ENCODE measurements at regions of chr2 and their contacts with region 1.

Region 1: DNA sequence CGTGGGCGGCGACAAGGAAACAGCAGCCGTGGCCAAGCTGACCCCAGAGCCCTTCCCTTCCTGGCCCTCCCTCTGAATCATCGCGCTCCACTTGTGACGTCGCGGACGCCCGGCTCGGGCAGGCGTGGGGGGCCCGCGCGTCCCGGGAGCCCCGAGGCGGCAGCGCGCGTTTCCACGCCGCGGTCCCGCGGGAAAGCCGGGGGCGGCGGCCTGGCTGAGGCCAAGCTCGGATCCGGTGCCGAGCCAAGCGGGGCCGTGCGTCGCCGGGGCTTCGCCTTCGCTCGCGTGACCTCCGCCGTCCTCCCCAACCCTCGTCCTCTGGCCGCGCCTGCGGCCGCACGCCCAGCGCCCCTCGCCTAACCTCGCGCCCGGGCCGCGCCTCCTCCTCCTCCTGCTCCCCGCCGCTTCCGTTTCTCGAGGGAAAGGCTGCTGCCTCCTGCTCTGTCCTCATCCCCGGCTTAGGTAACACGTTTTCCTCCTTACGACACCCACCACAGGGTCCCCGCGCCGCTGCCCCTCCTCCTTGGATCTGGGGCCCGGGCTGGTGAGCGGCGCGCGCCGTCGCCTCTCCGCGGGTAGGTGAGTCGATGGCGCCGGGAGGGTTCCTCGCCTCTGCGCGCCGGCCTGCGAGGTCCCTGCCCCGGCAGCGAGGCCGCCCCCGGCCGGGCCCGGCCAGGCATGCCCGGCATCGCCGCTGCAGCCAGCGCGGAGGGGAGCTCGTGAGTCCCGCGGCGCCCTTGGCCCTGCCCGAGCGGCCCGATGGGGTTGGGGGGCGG is at the start of gene INPP1:
- DNase-seq: peak; percentile 57
- ATAC-seq: peak; percentile 63
- H3K4me3 ChIP-seq: peak within 1 kb of the TSS; percentile 49 to 79 (median 72)
- H3K4me3 Mint-ChIP-seq: peak within 1 kb of the TSS; percentile 90
- H3K27ac ChIP-seq: no peak within 1 kb of the TSS
- H3K27ac Mint-ChIP-seq: peak within 1 kb of the TSS; percentile 73
- H3K4me1 ChIP-seq: peaks cover 7 to 11% of the 10 kb centered on the region in 2 donors
- H3K4me1 Mint-ChIP-seq: peaks cover 13% of the 10 kb centered on the region
- H3K27me3 ChIP-seq: no peaks in the 10 kb centered on the region
- H3K27me3 Mint-ChIP-seq: no peaks in the 10 kb centered on the region
- CTCF ChIP-seq: no peak
- total RNA-seq, gene INPP1: 3.7 and 4.6 TPM in 2 replicates

Region 2: DNA sequence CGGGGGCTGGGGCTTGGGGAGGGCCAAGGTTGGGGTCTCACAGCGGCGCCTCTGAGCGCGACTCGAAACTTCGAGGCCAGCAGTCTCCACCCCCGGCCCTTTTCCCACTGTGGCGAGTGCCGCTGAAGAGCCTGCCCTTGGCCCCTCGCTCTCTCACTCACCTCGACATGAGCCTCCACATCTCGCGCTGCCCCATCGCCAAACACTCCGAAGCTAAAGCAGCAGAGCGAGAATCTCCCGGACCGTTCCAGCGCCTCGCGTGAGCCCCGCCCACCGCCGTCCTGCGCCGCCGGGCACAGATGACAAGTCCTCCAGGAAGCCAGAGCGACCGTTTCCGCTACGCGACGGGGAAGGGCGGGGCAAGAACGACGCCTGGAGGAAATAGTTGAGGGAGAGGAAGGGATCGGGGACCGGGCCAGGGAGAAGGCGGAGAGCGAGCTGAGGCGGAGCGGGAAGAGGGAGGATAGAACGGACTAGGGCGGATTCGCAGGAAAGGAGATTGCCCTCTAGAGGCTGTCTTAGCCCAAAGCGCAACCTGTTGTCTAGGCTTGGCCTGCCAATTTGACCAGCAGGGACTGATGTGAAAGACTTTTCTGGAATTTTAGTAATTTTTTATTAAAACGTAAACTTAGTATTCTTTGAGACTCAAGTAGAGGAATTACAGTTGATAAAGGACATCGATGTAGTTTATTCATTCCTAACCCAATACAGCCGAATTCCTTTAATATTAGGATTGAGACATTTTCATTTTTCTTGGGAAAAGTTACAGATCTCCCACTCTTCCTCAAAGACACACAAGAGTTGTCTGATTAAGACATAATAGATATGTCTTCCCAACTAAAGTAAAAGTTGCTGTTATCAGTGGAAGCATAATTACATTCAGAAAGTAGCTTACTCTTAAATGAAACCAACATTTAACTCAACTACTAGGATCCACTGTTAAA is 23.9 kb before region 1 on chr2 and contains the start of gene HIBCH:
- CTCF ChIA-PET with region 1: interaction called, 7 read pairs
- POLR2A ChIA-PET with region 1: no interaction called
- intact Hi-C with region 1: loop called (anchors 1 kb)
- DNase-seq: peak; percentile 85
- ATAC-seq: peak; percentile 94
- H3K4me3 ChIP-seq: peak within 1 kb of the TSS; percentile 73 to 87 (median 79)
- H3K4me3 Mint-ChIP-seq: peak within 1 kb of the TSS; percentile 95
- H3K27ac ChIP-seq: peak within 1 kb of the TSS; percentile 80 to 84
- H3K27ac Mint-ChIP-seq: peak within 1 kb of the TSS; percentile 95
- H3K4me1 ChIP-seq: peaks cover 20 to 26% of the 10 kb centered on the region in 2 donors
- H3K4me1 Mint-ChIP-seq: peaks cover 42% of the 10 kb centered on the region
- H3K27me3 ChIP-seq: no peaks in the 10 kb centered on the region
- H3K27me3 Mint-ChIP-seq: peaks cover 8% of the 10 kb centered on the region
- CTCF ChIP-seq: peak; percentile 77
- total RNA-seq, gene HIBCH: 30.2 and 36.9 TPM in 2 replicates

Region 3: GRCh38 chr2:190376591-190377245 is 33.0 kb after region 1 on chr2:
- CTCF ChIA-PET with region 1: interaction called, 3 read pairs
- POLR2A ChIA-PET with region 1: no interaction called
- intact Hi-C with region 1: loop called (anchors 2 kb)
- DNase-seq: no peak
- ATAC-seq: no peak
- H3K4me3 ChIP-seq: no peak overlapping the region
- H3K4me3 Mint-ChIP-seq: no peak overlapping the region
- H3K27ac ChIP-seq: no peak overlapping the region
- H3K27ac Mint-ChIP-seq: no peak overlapping the region
- H3K4me1 ChIP-seq: no peaks in the 10 kb centered on the region
- H3K4me1 Mint-ChIP-seq: peaks cover 2% of the 10 kb centered on the region
- H3K27me3 ChIP-seq: no peaks in the 10 kb centered on the region
- H3K27me3 Mint-ChIP-seq: no peaks in the 10 kb centered on the region
- CTCF ChIP-seq: no peak

Region 4: DNA sequence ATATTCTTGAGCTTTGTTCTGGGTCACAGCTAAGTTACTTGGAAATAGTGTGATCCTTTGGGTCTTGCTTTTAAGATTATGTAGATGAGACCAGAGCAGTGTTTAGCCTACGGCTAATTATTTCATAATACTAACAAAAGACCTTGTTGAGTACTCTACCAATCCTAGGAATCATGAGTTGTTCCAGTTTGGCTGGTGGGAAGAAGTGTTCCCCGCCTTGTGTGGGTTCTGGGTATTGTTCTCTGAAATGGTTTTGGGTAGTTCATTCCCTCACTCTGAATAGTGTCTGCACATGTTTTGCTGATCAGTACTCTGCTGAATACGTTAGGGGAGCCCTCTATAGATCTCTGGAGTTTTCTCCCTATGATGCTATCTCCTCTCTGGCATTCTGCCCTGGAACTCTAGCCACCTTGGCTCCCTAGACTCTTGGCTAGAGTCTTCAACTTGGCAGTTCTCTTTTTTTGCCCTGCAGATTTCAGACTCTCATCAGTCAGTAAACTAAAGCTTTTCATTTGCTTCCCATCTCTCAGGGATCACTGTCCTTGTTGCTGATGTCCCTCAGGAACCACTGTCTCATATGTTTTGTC is 142.4 kb after region 1 on chr2:
- CTCF ChIA-PET with region 1: no interaction called
- POLR2A ChIA-PET with region 1: no interaction called
- intact Hi-C with region 1: no loop called
- DNase-seq: no peak
- ATAC-seq: no peak
- H3K4me3 ChIP-seq: no peak overlapping the region
- H3K4me3 Mint-ChIP-seq: no peak overlapping the region
- H3K27ac ChIP-seq: no peak overlapping the region
- H3K27ac Mint-ChIP-seq: no peak overlapping the region
- H3K4me1 ChIP-seq: no peaks in the 10 kb centered on the region
- H3K4me1 Mint-ChIP-seq: no peaks in the 10 kb centered on the region
- H3K27me3 ChIP-seq: no peaks in the 10 kb centered on the region
- H3K27me3 Mint-ChIP-seq: no peaks in the 10 kb centered on the region
- CTCF ChIP-seq: no peak

Region 5: DNA sequence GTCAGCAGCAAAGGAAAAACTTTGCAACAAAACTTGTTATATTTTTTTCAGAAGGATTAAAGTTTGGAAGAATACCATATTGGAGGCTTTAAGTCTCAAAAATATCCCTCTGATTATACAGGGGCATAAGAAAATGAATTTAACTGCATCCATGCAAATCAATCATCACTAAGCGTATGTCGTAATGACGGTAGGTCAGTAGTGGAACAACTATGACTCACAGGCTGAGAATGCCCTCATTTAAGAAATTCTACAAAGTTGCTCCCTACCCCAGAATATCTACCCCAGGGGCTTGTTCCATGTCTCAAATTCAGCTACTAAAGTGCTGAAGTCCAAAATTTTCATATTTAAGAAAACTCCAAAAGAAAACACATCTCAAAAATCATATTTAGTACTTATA is 292.7 kb after region 1 on chr2:
- CTCF ChIA-PET with region 1: no interaction called
- POLR2A ChIA-PET with region 1: no interaction called
- intact Hi-C with region 1: no loop called
- DNase-seq: no peak
- ATAC-seq: no peak
- H3K4me3 ChIP-seq: no peak overlapping the region
- H3K4me3 Mint-ChIP-seq: no peak overlapping the region
- H3K27ac ChIP-seq: no peak overlapping the region
- H3K27ac Mint-ChIP-seq: no peak overlapping the region
- H3K4me1 ChIP-seq: peaks cover 4 to 5% of the 10 kb centered on the region in 2 donors
- H3K4me1 Mint-ChIP-seq: peaks cover 7% of the 10 kb centered on the region
- H3K27me3 ChIP-seq: no peaks in the 10 kb centered on the region
- H3K27me3 Mint-ChIP-seq: no peaks in the 10 kb centered on the region
- CTCF ChIP-seq: no peak

Region 6: GRCh38 chr2:190693533-190694232 is 350.0 kb after region 1 on chr2:
- CTCF ChIA-PET with region 1: no interaction called
- POLR2A ChIA-PET with region 1: no interaction called
- intact Hi-C with region 1: no loop called
- DNase-seq: no peak
- ATAC-seq: no peak
- H3K4me3 ChIP-seq: no peak overlapping the region
- H3K4me3 Mint-ChIP-seq: no peak overlapping the region
- H3K27ac ChIP-seq: no peak overlapping the region
- H3K27ac Mint-ChIP-seq: no peak overlapping the region
- H3K4me1 ChIP-seq: no peaks in the 10 kb centered on the region
- H3K4me1 Mint-ChIP-seq: no peaks in the 10 kb centered on the region
- H3K27me3 ChIP-seq: no peaks in the 10 kb centered on the region
- H3K27me3 Mint-ChIP-seq: no peaks in the 10 kb centered on the region
- CTCF ChIP-seq: no peak